Gastrocnemius medialis (tissue), 4 donors: ENCODE measurements at regions of chr3 and their contacts with region 1.

Region 1: GRCh38 chr3:68876112-68876713 is 56.1 kb downstream of the TAFA4 start:
- DNase-seq: no peak
- ATAC-seq: no peak
- H3K4me3 ChIP-seq: no peak overlapping the region
- H3K27ac ChIP-seq: no peak overlapping the region
- H3K4me1 ChIP-seq: no peaks in the 10 kb centered on the region
- H3K27me3 ChIP-seq: peaks cover 0 to 1% (median 0%) of the 10 kb centered on the region in 3 donors
- CTCF ChIP-seq: peak; percentile 57 to 79 (median 72)
- POLR2A ChIP-seq: no peak

Region 2: GRCh38 chr3:66938338-66938963 is 1937.8 kb before region 1 on chr3:
- in situ Hi-C with region 1: loop called in 1 of 4 experiments (anchors 25 kb)
- intact Hi-C with region 1: no loop called
- DNase-seq: no peak
- ATAC-seq: peak in 1 of 2 donors; percentile 68
- H3K4me3 ChIP-seq: no peak overlapping the region
- H3K27ac ChIP-seq: no peak overlapping the region
- H3K4me1 ChIP-seq: no peaks in the 10 kb centered on the region
- H3K27me3 ChIP-seq: no peaks in the 10 kb centered on the region
- CTCF ChIP-seq: peak in 2 of 5 experiments; percentile 54 to 63
- POLR2A ChIP-seq: no peak

Region 3: GRCh38 chr3:66971891-66972551 is 1904.2 kb before region 1 on chr3:
- in situ Hi-C with region 1: loop called in 3 of 4 experiments (anchors 10 to 25 kb)
- intact Hi-C with region 1: loop called (anchors 1 kb)
- DNase-seq: peak; percentile 38 to 63
- ATAC-seq: peak; percentile 89 to 99
- H3K4me3 ChIP-seq: peak overlapping the region; percentile 36 to 65 (median 41)
- H3K27ac ChIP-seq: peak overlapping the region in 1 of 4 donors; percentile 36
- H3K4me1 ChIP-seq: no peaks in the 10 kb centered on the region
- H3K27me3 ChIP-seq: no peaks in the 10 kb centered on the region
- CTCF ChIP-seq: peak; percentile 56 to 85 (median 72)
- POLR2A ChIP-seq: no peak

Region 4: DNA sequence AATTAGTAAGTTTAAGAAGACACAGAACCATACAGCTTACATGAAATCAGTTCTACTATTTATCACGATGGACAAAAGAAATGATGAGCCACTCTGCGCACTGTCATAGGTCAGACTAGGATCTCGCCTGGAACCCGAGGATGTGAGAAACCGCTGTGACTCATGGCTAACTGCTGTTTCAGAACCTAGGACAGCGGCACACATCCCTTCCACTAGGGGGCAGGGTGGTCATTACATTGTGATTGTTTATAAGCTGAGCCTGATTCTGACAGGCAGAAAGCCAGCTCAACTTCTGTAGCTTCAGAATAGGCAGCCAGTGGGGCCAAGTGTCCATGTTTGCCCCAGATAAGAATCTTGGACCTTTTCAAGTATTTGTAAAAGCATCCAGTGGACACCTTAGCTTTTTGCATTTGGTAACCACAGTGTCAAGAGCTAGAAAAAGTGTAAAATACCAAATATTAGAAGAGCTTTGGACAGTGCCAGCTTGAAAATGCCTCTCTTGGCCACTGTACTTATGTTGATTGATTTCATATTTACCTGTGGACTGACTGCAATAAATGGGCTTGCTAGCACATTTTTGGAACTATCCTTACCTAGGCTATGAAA is 1762.3 kb before region 1 on chr3:
- in situ Hi-C with region 1: loop called in 3 of 4 experiments (anchors 25 kb)
- intact Hi-C with region 1: no loop called
- DNase-seq: peak; percentile 6 to 32
- ATAC-seq: no peak
- H3K4me3 ChIP-seq: no peak overlapping the region
- H3K27ac ChIP-seq: no peak overlapping the region
- H3K4me1 ChIP-seq: peaks cover 0 to 3% of the 10 kb centered on the region in 2 donors
- H3K27me3 ChIP-seq: peaks cover 0 to 2% (median 0%) of the 10 kb centered on the region in 3 donors
- CTCF ChIP-seq: peak in 4 of 5 experiments; percentile 45 to 64 (median 59)
- POLR2A ChIP-seq: no peak

Region 5: DNA sequence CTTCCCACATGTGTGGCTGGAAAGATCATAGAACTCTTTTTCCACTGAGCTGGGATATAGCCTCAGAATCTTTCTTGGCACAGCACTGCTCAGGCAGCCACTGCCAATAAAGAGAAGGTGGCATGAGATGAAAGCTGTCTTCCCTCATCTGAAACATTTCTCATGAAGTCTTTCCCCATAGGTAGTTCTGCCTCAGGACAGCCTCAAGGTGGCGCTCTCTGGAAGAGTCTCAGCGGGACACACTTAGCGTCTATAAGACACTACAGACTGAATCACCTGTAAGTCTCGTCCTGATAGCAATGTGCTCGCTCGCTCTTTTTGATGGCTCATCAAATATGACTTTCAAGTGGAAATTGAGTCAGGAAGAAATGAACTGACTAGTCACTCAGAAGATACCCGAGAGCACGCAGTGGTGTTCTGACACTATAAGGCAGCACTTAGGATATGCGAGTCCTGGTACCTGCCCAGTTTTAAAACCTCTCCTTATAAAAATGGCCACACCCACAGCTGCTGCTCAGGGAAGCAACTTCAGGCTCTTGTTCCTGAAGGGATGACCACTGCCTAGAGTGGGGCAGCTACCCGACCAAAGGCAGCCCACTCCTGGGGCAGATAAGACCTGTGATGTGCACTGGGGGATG is 1491.3 kb before region 1 on chr3:
- in situ Hi-C with region 1: loop called in 1 of 4 experiments (anchors 25 kb)
- intact Hi-C with region 1: loop called (anchors 2 kb)
- DNase-seq: no peak
- ATAC-seq: peak in 1 of 2 donors; percentile 39
- H3K4me3 ChIP-seq: no peak overlapping the region
- H3K27ac ChIP-seq: no peak overlapping the region
- H3K4me1 ChIP-seq: no peaks in the 10 kb centered on the region
- H3K27me3 ChIP-seq: no peaks in the 10 kb centered on the region
- CTCF ChIP-seq: peak in 3 of 5 experiments; percentile 17 to 43 (median 34)
- POLR2A ChIP-seq: no peak

Region 6: DNA sequence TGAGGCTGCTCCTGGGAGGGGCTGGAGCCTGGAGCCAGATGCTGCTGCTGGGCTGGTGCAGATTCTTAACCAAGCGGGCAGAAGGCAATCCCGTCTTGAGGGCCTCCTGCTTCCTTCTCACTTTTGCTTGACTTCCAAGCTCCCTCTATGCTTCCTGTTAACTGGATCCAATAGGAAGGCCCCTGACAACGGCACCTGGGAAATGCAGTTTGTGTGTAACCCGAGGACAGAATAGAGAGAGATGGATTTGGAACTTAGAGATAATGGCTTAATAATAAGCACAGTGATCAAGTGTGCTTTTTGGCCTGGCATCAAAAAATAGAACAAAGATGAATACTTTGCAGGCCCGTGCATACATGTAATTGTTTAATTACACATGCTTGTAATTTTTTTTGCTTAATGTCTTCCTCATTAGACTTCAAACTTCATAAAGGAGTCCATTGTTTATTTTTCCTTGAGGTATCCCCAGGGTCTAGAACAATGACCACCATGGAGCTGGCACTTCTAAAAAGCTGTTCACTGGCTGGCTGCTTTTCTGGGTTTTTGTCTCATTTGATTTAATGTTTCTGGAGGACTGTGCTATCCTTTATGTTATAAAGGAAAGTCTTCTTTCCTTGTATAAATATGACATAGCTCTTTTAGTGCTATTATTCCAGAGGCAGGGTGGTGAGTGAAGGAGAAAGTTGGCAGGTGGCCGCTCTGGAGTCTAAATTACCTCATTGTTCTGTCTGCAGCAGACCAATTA is 799.7 kb after region 1 on chr3:
- in situ Hi-C with region 1: no loop called
- intact Hi-C with region 1: no loop called
- DNase-seq: no peak
- ATAC-seq: no peak
- H3K4me3 ChIP-seq: no peak overlapping the region
- H3K27ac ChIP-seq: no peak overlapping the region
- H3K4me1 ChIP-seq: no peaks in the 10 kb centered on the region
- H3K27me3 ChIP-seq: peaks cover 0 to 2% (median 0%) of the 10 kb centered on the region in 3 donors
- CTCF ChIP-seq: no peak
- POLR2A ChIP-seq: no peak